Posterior cingulate gyrus (tissue), 11 donors: ENCODE measurements at regions of chr4 and their contacts with region 1.

Region 1: DNA sequence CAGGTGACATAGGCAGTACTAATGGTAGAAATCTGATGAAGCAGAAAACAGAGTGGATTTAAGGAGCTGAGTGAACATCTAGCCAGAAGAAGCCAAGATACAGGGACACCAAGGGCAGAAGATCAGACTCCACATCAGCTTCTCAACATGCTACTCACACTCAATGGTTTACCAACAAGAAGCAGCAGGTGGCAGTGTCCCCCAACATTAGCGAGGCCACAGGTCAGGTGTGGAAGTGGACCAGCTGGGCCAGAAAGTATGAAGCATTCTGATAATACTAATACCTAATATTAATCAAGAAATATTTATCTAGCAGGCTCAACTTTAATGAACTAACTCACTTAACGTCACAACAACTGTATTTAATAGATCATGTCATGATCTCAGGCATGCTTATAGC is 73.4 kb upstream of the TTC29 start:
- DNase-seq: peak in 8 of 10 donors; percentile 17 to 92 (median 70)

Region 2: GRCh38 chr4:147096667-147097604 is 77.9 kb after region 1 on chr4:
- intact Hi-C with region 1: loop called (anchors 1 kb)
- DNase-seq: no peak